IMR-90 (cell line): ENCODE measurements at regions of chr7 and their contacts with region 1.

Region 1: DNA sequence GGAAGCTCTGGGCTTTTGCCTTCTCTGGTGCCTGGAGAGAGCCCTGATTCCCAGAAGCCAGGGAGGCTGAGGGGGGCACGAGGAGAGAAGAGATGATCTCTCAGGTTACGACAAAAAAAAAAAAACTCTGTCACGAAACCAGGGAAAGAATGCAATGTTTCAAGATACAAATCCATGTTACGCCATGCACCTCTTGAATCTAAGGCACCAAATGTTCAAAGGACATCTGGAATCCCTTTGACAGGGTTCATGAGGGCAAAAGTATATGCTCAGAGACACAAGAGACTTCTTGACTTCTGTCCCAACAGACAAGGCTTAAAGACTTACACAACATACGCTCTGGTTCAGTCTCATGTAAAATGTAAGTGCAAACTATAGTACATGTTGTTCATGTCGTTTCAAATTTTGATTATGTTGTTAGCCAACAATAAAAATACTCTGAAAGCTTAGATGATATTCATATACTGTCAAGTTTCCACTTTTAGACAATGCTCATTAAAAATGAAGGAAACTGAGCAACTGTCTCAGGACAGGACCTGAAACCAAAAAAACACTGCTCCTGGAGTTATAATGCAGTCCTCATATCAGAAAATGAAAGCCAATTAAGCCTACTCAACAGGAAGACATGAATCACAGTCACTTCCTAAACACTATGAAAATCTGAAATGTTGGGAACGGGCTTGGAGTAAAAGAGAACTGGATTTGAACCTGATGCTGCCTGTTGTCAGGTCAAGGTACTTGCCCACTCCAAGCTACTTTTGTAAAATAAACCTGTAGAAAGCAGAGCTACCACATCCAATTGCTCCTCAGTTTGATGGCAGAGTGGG is 72.3 kb downstream of the CHCHD3 start:
- DNase-seq: no peak
- ATAC-seq: no peak
- H3K4me3 ChIP-seq: no peak overlapping the region
- H3K27ac ChIP-seq: no peak overlapping the region
- H3K4me1 ChIP-seq: no peaks in the 10 kb centered on the region
- H3K27me3 ChIP-seq: no peaks in the 10 kb centered on the region
- CTCF ChIP-seq: no peak
- POLR2A ChIP-seq: no peak
- RAD21 ChIP-seq: no peak

Region 2: DNA sequence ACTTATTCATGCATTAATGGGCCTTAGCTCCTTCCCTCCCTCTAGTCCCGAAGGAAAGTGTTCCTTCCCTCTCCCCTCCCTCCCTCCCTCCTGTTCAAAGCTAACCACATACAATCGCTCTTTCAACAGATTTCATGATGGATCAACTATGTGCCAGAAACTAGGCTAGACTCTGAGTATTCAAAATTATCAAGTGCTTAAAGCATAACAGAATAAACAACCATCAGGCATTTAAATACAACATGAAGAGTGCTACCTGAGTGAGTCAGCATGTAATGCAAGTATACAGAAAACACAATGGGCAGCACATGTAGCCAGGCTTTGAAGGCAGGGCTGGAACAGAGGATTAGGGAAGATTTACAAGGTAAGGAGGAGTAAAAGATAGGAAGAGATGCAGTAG is 60.9 kb after region 1 on chr7:
- CTCF ChIA-PET with region 1: no interaction called
- POLR2A ChIA-PET with region 1: no interaction called
- dilution Hi-C with region 1: no loop called
- in situ Hi-C with region 1: no loop called
- intact Hi-C with region 1: loop called (anchors 10 kb)
- DNase-seq: no peak
- ATAC-seq: no peak; the same call in 1 of the 2 replicates
- H3K4me3 ChIP-seq: no peak overlapping the region
- H3K27ac ChIP-seq: no peak overlapping the region
- H3K4me1 ChIP-seq: peaks cover 2% of the 10 kb centered on the region
- H3K27me3 ChIP-seq: no peaks in the 10 kb centered on the region
- CTCF ChIP-seq: no peak
- POLR2A ChIP-seq: no peak
- RAD21 ChIP-seq: no peak

Region 3: GRCh38 chr7:133315332-133316040 is 305.8 kb after region 1 on chr7:
- CTCF ChIA-PET with region 1: no interaction called
- POLR2A ChIA-PET with region 1: interaction called, 14 read pairs
- dilution Hi-C with region 1: no loop called
- in situ Hi-C with region 1: no loop called
- intact Hi-C with region 1: no loop called
- DNase-seq: peak; percentile 75
- ATAC-seq: peak; percentile 82
- H3K4me3 ChIP-seq: no peak overlapping the region
- H3K27ac ChIP-seq: no peak overlapping the region
- H3K4me1 ChIP-seq: peaks cover 4% of the 10 kb centered on the region
- H3K27me3 ChIP-seq: no peaks in the 10 kb centered on the region
- CTCF ChIP-seq: no peak
- POLR2A ChIP-seq: no peak
- RAD21 ChIP-seq: no peak